ENCODE measurements at regions of chr3 and their contacts with region 1.

Region 1: GRCh38 chr3:171193693-171194092 is 167.2 kb upstream of the SLC2A2 start:
- DNase-seq: peak; percentile 97
- H3K4me3 ChIP-seq: no peak overlapping the region
- H3K27ac ChIP-seq: peak overlapping the region; percentile 91
- H3K4me1 ChIP-seq: peaks cover 66% of the 10 kb centered on the region
- H3K27me3 ChIP-seq: no peaks in the 10 kb centered on the region
- CTCF ChIP-seq: no peak
- POLR2A ChIP-seq: no peak

Region 2: GRCh38 chr3:171358181-171358880 is 164.6 kb after region 1 on chr3:
- CTCF ChIA-PET with region 1: no interaction called
- POLR2A ChIA-PET with region 1: no interaction called
- dilution Hi-C with region 1: no loop called
- intact Hi-C with region 1: loop called (anchors 1 kb)
- DNase-seq: peak; percentile 41
- H3K4me3 ChIP-seq: no peak overlapping the region
- H3K27ac ChIP-seq: peak overlapping the region; percentile 21
- H3K4me1 ChIP-seq: peaks cover 42% of the 10 kb centered on the region
- H3K27me3 ChIP-seq: no peaks in the 10 kb centered on the region
- CTCF ChIP-seq: no peak
- POLR2A ChIP-seq: no peak